GM10248 (cell line): ENCODE measurements at regions of chr11 and their contacts with region 1.

Region 1: DNA sequence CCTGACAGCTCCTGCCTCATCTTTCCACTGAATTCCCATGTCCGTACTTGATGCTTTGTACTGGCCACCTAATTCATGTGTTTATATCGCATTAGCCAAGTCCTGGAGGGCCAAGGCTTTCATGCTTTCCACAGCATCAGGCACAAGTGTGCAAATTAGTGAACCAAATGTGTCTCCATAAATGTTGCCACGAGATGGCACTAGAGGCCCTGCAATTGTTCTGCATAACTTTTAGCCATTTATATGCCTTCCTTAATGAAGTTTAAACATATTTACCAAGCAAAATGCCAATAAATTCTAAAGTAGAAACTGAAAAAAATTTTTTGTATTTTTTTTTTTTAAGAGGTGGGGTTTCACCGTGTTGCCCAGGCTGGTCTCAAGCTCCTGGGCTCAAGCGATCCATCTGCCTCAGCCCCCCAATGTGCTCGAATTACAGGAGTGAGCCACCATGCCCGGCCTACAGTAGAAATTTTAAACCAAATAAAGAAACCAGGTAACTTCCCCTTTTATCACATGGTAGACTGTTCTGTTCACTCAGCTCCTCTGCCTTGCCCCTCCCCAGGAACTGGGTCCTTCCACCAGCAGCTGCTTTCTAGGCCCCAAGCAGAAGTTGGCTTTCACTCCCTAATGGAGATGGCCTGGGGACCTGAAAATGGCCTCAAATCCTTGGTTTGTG is 20.8 kb upstream of the IL18BP start:
- DNase-seq: peak; percentile 59
- CTCF ChIP-seq: peak; percentile 73

Region 2: GRCh38 chr11:71928737-71929452 is 49.0 kb before region 1 on chr11 and contains the start of gene RNF121:
- CTCF ChIA-PET with region 1: interaction called, 24 read pairs
- POLR2A ChIA-PET with region 1: no interaction called
- DNase-seq: peak; percentile 95
- CTCF ChIP-seq: no peak

Region 3: GRCh38 chr11:71955898-71956456 is 21.9 kb before region 1 on chr11:
- CTCF ChIA-PET with region 1: interaction called, 16 read pairs
- POLR2A ChIA-PET with region 1: no interaction called
- DNase-seq: no peak
- CTCF ChIP-seq: no peak

Region 4: GRCh38 chr11:71991494-71991893 is 13.6 kb after region 1 on chr11:
- CTCF ChIA-PET with region 1: interaction called, 75 read pairs
- POLR2A ChIA-PET with region 1: no interaction called
- DNase-seq: peak; percentile 55
- CTCF ChIP-seq: no peak

Region 5: GRCh38 chr11:72015511-72016171 is 37.8 kb after region 1 on chr11:
- CTCF ChIA-PET with region 1: interaction called, 101 read pairs
- POLR2A ChIA-PET with region 1: interaction called, 3 read pairs
- DNase-seq: no peak
- CTCF ChIP-seq: peak; percentile 71

Region 6: DNA sequence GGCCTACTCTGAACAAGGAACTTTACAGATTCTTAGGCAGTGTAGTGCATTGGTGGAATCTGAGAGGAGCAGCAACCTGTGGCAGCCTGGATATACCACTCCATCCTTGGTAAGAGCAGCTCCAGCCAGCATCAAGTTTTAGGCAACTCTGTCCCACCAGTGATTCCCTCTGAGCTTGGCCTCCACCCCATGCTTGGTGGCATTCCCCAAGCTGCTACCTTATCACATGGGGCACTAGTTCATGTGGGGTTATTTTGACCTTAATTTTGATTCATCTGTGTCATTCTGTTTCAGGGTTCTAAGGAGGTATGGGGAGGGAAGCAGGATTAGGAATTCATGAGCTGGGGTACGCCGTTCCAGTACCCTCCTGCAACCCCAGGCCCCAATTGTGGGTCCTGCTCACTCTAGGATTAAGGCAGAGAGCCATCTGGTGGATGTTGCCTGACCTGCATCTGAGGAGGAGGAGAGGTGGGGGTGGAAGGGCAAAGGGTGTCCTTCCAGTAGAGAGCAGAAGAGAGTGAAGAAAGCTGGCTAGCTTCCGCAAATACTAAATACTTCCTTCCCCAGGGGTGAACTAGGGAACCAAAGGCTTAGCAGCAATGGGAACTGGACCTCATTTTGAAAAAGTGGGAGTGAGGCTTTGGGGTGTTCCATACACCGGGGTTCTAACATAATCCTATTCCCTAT is 113.3 kb after region 1 on chr11:
- CTCF ChIA-PET with region 1: interaction called, 24 read pairs
- POLR2A ChIA-PET with region 1: no interaction called
- DNase-seq: peak; percentile 78
- CTCF ChIP-seq: peak; percentile 79

Region 7: DNA sequence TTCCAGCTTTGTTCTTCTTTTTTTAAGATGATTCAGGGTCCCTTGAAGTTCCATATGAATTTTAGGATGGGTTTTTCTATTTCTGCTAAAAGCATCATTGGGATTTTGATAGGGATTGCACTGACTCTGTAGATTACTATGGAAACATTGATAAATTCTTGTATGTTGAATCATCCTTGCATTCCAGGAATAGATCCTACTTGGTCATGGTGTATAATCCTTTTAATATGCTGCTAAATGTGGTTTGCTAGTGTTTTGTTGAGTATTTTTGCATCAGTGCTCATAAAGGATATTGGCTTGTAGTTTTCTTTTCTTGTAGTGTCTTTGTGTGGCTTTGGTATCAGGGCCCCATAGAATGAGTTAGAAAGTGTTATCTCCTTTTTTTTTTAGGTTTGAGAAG is 301.0 kb after region 1 on chr11:
- CTCF ChIA-PET with region 1: no interaction called
- POLR2A ChIA-PET with region 1: no interaction called
- DNase-seq: no peak
- CTCF ChIP-seq: no peak